Activated T-helper 2 cell treated with anti-CD3 and anti-CD28 coated beads, Interferon-gamma antibody, Interleukin-2, Interleukin-4, amounts not matched to agents 10 μg/mL and 5 μg/mL and 100 μg/mL, durations not matched to agents 14 hours and 24 hours and 36 hours (primary cell): ENCODE measurements at regions of chr1 and their contacts with region 1.

Region 1: DNA sequence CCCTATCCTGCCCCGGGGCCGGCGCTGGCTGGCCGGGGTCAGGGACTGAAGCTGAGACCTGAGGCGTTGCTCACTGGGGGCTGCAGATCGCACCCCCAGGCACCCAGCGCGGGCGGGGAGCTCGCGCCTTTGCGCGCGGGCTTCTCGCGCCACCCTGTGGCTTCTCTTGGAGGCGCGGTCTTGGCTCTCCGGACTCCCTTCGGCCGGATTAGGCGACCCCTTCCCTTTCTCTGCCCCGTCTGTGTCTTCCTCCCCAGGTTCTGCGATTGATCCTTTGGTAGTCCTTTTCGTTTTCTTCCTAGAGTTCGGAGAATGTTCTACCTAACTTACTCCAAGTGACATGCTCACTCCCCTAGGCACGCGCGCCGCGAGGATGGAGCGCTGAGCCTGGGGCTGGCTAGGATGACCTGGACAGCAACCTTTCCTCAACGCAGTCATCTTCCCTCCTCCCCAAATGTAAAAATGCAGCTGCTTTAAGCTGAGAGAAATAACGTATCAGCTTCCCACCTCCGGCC is 495 bp upstream of the NTRK1 start:
- DNase-seq: peak; percentile 48
- H3K4me3 Mint-ChIP-seq: peak overlapping the region; percentile 87
- H3K27ac Mint-ChIP-seq: peak overlapping the region; percentile 44
- H3K4me1 Mint-ChIP-seq: peaks cover 44% of the 10 kb centered on the region
- H3K27me3 Mint-ChIP-seq: peaks cover 27% of the 10 kb centered on the region

Region 2: DNA sequence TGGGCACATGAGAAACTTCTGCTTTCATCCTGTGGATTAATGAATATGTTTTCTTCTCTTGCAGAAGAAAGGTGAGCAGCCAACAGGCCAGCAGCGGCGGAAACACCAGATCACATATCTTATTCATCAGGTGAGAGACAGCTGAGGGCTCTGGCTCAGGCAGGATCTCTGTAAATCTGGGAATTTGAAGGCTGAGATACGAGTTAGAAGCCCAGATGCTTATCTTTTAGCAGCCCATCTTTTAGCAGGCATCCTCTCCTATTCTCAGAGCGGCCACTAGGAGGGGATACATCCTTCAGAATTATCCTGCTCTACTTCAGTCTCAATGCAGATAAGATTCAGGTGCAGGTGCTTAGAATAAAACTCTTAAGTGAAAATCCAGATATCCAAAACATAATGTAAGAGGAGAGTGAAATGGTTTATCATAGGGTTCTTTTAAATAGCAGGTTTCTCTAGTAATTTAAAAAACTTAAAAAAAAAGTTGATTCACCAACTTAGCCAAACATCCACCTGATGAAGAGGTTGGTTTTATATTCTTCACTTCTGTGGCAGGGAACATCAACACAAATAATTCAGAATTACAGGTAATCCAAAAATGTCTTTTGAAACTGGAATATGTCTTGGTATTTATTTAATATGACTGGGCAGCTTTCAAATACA is 62.8 kb before region 1 on chr1:
- intact Hi-C with region 1: loop called (anchors 1 kb)
- DNase-seq: peak; percentile 48
- H3K4me3 Mint-ChIP-seq: no peak overlapping the region
- H3K27ac Mint-ChIP-seq: no peak overlapping the region
- H3K4me1 Mint-ChIP-seq: peaks cover 28% of the 10 kb centered on the region
- H3K27me3 Mint-ChIP-seq: no peaks in the 10 kb centered on the region

Region 3: GRCh38 chr1:156816561-156817328 is 43.4 kb before region 1 on chr1 and contains the start of gene SH2D2A:
- intact Hi-C with region 1: loop called (anchors 1 kb)
- DNase-seq: peak; percentile 94
- H3K4me3 Mint-ChIP-seq: peak within 1 kb of the TSS; percentile 88
- H3K27ac Mint-ChIP-seq: peak within 1 kb of the TSS; percentile 100
- H3K4me1 Mint-ChIP-seq: peaks cover 48% of the 10 kb centered on the region
- H3K27me3 Mint-ChIP-seq: no peaks in the 10 kb centered on the region
- total RNA-seq, gene SH2D2A: 453 and 474 TPM in 2 replicates

Region 4: GRCh38 chr1:156838981-156839410 is 21.2 kb before region 1 on chr1:
- intact Hi-C with region 1: loop called (anchors 2 kb)
- DNase-seq: peak; percentile 36
- H3K4me3 Mint-ChIP-seq: no peak overlapping the region
- H3K27ac Mint-ChIP-seq: peak overlapping the region; percentile 69
- H3K4me1 Mint-ChIP-seq: peaks cover 46% of the 10 kb centered on the region
- H3K27me3 Mint-ChIP-seq: peaks cover 23% of the 10 kb centered on the region

Region 5: GRCh38 chr1:157133426-157133825 is 273.3 kb after region 1 on chr1:
- intact Hi-C with region 1: loop called (anchors 5 kb)
- DNase-seq: peak; percentile 33
- H3K4me3 Mint-ChIP-seq: peak overlapping the region; percentile 98
- H3K27ac Mint-ChIP-seq: peak overlapping the region; percentile 67
- H3K4me1 Mint-ChIP-seq: peaks cover 52% of the 10 kb centered on the region
- H3K27me3 Mint-ChIP-seq: no peaks in the 10 kb centered on the region